ENCODE measurements at regions of chr5 and their contacts with region 1.

Region 1: DNA sequence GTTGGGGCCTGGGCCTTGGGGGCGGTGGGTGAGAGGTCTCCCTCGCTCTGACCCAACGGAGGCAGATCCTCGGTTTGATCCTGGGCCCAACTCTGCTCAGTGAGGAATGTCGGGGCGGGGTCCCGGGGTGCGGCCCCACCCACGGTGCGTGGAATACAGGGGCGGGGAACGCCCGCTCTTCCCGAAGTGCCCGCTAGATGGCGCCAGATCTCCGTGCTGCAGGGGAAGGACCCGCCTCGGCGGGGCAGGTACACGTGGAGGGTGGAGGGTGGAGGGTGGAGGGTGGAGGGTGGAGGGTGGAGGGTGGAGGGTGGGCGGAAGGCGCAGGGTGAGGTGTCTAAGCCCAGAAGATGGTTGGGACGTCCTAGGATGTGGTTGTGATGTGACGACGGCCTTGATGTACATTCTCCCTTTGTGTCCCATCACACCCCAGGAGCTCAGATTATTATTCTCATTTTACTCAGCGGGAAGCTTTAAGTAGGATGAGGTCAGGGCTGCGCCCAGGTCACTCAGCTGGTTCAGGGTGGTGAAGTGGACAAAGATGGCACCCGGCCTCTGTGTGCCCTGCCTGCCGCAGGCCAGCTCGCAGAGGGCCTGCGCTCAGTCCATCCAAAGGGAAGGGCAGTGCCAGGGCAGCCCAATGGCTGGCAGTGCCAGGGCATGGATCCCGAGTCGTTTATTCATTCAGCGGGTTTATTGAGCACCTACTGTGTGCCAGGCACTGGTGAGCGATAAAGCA is 9.4 kb upstream of the RPS14 start:
- DNase-seq: peak; percentile 82
- H3K4me3 ChIP-seq: peak overlapping the region; percentile 52
- H3K27ac ChIP-seq: peak overlapping the region; percentile 23
- H3K4me1 ChIP-seq: peaks cover 14% of the 10 kb centered on the region
- H3K27me3 ChIP-seq: no peaks in the 10 kb centered on the region
- CTCF ChIP-seq: peak; percentile 86

Region 2: DNA sequence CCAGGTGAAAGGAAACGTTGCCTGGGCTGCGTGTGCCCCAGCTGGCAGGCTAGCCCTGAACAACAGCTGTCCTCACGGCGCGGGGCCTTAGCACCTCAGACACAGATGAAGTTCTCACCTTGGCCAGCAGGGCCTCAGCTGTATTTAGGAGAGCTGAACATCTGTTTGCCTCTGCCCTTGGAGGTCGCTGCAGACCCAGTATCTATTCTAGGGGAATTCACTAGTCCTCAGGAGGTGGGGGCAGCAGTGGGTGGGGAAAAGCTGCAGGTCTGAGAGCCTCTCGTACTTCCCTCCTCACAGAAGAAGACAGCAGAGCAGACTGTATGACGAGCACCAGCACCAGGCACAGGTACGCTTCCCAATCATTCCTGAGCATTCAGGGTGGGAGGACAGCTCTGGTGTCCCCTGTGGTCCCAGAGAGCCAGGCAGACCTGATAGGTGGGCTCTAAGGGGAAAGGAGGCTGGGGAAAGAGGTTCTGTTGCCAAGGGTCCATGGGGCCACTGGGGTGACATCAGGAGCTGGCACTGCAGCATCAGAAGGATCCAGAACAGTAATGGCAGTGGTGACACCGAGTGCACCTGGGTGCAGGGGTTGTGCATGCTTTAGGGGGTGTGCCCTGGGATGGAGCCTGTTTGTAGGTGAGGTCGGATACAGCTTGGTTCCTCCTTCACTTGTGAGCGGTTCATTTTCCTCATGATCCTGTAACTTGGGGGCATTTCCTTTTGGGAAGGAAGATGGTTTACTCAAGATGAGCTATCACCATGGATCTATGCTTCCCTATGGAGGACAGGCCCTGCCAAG is 60.1 kb before region 1 on chr5:
- intact Hi-C with region 1: no loop called
- DNase-seq: no peak
- H3K4me3 ChIP-seq: no peak overlapping the region
- H3K27ac ChIP-seq: no peak overlapping the region
- H3K4me1 ChIP-seq: peaks cover 2% of the 10 kb centered on the region
- H3K27me3 ChIP-seq: no peaks in the 10 kb centered on the region
- CTCF ChIP-seq: no peak

Region 3: DNA sequence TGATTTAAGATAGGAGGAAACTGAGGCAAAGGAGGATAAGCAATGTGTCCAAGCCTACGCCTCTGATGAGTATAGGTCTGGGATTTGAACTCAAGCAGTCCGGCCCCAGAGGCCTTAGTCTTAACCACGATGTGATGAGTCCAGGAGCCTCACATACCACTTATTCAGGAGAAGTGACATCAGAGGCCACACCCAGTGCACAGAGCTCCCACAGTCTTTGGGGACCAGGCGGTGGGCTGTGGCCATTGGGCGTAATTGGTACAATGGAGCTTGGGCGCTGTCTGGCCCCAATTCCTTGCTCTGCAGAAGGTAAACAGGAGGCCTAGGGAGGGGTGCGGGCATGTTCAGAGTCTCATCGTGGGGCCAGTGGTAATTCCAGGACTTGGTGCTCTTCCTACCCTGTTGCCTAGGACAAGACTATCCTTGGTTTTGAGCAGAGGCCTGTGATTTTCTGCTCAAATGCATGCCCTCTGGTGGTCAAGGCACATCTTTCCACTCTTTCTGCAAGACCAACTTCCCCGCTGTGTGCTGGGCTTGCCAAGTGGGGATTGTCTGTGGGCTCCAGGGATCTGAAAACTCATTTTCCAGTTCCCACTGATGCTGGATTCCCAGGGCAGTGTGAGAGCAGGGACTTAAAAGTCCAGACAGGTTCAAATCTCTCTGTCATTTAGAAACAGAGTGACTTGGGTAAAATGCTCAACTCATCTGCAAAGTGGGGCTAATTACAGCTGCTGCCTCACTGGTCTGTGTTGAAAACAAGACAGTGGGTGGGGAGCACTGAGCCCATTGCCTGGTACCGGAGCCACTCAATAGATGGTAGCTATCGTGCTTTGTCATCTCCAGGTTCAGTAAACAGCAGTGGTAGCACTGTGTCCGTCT is 64.7 kb after region 1 on chr5:
- intact Hi-C with region 1: loop called (anchors 5 kb)
- DNase-seq: no peak
- H3K4me3 ChIP-seq: no peak overlapping the region
- H3K27ac ChIP-seq: peak overlapping the region; percentile 83
- H3K4me1 ChIP-seq: peaks cover 98% of the 10 kb centered on the region
- H3K27me3 ChIP-seq: no peaks in the 10 kb centered on the region
- CTCF ChIP-seq: peak; percentile 72

Region 4: GRCh38 chr5:151270599-151270998 is 811.6 kb after region 1 on chr5:
- intact Hi-C with region 1: no loop called
- DNase-seq: no peak
- H3K4me3 ChIP-seq: no peak overlapping the region
- H3K27ac ChIP-seq: no peak overlapping the region
- H3K4me1 ChIP-seq: no peaks in the 10 kb centered on the region
- H3K27me3 ChIP-seq: no peaks in the 10 kb centered on the region
- CTCF ChIP-seq: no peak

Measured in left ventricle myocardium inferior (tissue), 1 donor.